Naive thymus-derived CD8-positive, alpha-beta T cell (primary cell): ENCODE measurements at regions of chr17 and their contacts with region 1.

Region 1: DNA sequence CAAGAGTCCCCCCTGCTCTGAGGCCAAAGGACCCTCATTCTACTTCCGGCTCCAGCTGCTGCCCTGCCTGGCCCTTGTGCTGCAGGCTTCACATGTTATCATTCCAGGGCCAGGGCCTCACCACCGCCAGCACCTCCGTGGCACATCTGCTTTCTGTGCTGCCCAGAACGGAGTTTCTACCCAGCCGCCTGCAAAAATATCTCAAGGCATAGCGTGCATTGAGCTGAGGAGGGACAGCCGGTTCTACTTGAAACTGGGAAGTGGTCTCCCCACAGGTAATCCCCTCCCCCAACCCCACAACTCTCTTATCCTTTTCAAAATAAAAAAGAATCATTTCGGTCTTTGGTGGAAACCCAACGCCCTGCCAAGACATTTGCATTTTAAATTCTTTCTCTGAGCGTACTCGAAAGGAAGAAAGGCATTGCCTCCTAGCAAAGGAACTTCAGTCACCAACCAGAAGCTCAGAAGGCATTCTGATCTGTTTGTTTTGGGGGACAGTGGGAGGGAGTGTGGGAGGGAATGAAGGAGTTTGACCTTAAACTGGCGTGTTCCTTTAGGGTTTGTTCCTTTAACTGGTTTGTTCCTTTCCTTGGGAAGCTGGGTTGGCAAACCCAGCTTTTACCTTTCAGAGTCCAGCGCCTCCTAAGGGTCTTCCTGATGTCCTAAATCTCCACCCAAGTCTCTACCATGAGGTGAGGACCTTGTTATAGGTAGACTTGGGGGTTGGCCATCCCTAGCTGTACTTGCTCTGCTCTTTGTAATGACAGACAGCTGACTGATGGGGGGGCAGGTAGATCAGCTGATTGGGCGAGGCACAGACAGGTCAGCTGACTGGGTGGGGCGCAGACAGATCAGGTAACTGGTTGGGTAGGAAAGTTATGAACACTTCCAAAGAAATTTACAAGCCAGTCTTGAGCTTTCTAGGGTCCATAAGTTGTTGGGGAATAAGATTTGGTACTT is 33.4 kb upstream of the PIK3R6 start:
- DNase-seq: peak in 7 of 10 donors; percentile 17 to 68 (median 43)
- ATAC-seq: no peak
- H3K4me3 Mint-ChIP-seq: peak overlapping the region; percentile 33 to 83 (median 58)
- H3K27ac Mint-ChIP-seq: peak overlapping the region; percentile 60 to 99 (median 96)
- H3K4me1 Mint-ChIP-seq: peaks cover 40 to 77% (median 70%) of the 10 kb centered on the region in 4 donors
- H3K27me3 Mint-ChIP-seq: peaks cover 0 to 2% (median 0%) of the 10 kb centered on the region in 5 donors

Region 2: GRCh38 chr17:8941520-8941919 is 40.6 kb after region 1 on chr17:
- POLR2A ChIA-PET with region 1: interaction called, 51 read pairs
- DNase-seq: peak; percentile 53 to 81 (median 66)
- ATAC-seq: peak; percentile 64 to 66
- H3K4me3 Mint-ChIP-seq: peak overlapping the region; percentile 67 to 91 (median 82)
- H3K27ac Mint-ChIP-seq: peak overlapping the region; percentile 91 to 99 (median 96)
- H3K4me1 Mint-ChIP-seq: peaks cover 59 to 96% (median 89%) of the 10 kb centered on the region in 4 donors
- H3K27me3 Mint-ChIP-seq: no peaks in the 10 kb centered on the region

Region 3: GRCh38 chr17:8954339-8954738 is 53.4 kb after region 1 on chr17:
- POLR2A ChIA-PET with region 1: interaction called, 26 read pairs
- DNase-seq: peak; percentile 65 to 91 (median 81)
- ATAC-seq: peak; percentile 93 to 98
- H3K4me3 Mint-ChIP-seq: peak overlapping the region; percentile 72 to 93 (median 87)
- H3K27ac Mint-ChIP-seq: peak overlapping the region; percentile 92 to 100 (median 98)
- H3K4me1 Mint-ChIP-seq: peaks cover 55 to 99% (median 94%) of the 10 kb centered on the region in 4 donors
- H3K27me3 Mint-ChIP-seq: no peaks in the 10 kb centered on the region